HAP-1 (cell line): ENCODE measurements at regions of chr6 and their contacts with region 1.

Region 1: DNA sequence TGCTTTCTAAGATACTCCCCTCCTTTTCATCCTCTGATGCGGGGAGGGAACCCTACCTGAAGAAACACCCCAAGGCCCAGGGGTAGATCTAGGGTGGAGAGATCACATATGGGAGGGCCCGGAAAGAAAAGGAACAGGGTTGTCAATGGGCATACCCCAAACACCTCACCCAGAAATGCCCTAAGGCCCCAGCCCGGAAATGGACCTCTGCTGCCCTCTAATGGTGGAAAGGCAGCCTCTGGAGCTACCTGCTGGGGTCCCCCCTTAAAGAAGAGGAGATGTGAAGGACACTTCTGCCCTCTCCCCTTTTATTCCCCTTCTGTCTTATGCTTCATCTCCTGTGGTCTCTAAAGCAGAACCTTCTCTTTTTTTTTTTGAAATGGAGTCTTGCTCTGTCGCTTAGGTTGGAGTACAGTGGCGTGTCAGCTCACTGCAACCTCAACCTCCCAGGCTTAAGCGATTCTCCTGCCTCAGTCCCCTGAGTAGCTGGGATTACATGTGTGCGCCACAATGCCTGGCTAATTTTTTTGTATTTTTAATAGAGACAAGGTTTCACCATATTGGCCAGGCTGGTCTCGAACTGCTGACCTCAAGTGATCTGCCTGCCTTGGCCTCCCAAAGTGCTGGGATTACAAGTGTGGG is 458 bp upstream of the ARMC12 start:
- DNase-seq: peak; percentile 57 to 89
- H3K4me3 ChIP-seq: no peak overlapping the region
- H3K4me1 ChIP-seq: peaks cover 30% of the 10 kb centered on the region
- H3K27me3 ChIP-seq: no peaks in the 10 kb centered on the region

Region 2: GRCh38 chr6:35511562-35511941 is 224.8 kb before region 1 on chr6:
- in situ Hi-C with region 1: no loop called
- DNase-seq: no peak
- H3K4me3 ChIP-seq: no peak overlapping the region
- H3K4me1 ChIP-seq: no peaks in the 10 kb centered on the region; the same call in 1 of the 2 replicates
- H3K27me3 ChIP-seq: no peaks in the 10 kb centered on the region

Region 3: DNA sequence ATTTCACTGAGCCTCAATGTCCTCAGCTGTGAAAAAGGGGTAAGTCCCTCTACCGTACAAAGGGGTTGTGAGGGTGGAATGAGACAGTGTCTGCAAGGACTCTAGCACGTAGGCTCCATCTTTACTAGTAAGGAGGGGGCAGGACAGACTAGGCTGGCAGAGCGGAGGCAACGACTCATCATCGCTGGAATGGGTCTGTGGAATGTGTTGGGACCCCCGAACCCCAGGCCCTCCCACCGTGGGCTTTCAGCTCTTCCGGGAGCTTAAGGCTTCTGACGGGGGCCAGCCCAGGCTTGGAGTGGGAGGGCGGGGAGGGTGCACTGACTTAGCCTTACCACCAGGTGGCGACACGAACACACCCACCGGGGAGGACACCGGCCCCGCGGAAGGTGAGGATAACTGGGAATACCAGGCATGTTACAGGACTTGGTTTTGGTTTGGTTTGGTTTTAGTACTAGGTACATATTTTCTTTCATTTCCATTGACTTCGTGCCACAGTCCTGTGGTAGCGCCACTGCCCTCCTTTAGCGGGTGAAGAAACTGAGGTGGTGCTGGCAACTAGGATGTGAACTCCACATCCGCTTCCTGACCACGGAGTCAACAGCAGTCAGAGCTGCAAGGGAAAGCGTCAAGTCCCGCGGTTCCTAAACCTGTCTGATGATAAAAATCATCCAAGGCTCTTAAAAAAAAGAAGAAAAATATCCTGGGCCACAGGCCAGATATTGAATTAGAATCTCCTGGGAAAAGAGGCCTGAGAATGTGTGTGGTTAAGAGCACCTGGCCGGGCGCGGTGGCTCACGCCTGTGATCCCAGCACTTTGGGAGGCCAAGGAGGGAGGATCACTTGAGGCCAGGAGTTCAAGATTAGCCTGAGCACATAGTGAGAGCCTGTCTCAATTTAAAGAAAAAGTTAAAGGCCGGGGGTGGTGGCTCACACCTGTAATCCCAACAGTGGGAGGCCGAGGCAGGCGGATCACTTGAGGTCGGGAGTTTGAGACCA is 213.4 kb before region 1 on chr6:
- in situ Hi-C with region 1: loop called (anchors 5 kb)
- DNase-seq: peak; percentile 72 to 91
- H3K4me3 ChIP-seq: no peak overlapping the region
- H3K4me1 ChIP-seq: peaks cover 3% of the 10 kb centered on the region; the same call in 1 of the 2 replicates
- H3K27me3 ChIP-seq: no peaks in the 10 kb centered on the region

Region 4: GRCh38 chr6:35583893-35584688 is 152.3 kb before region 1 on chr6:
- in situ Hi-C with region 1: loop called (anchors 5 kb)
- DNase-seq: peak; percentile 74 to 76
- H3K4me3 ChIP-seq: no peak overlapping the region
- H3K4me1 ChIP-seq: no peaks in the 10 kb centered on the region
- H3K27me3 ChIP-seq: no peaks in the 10 kb centered on the region